ENCODE measurements at regions of chr10 and their contacts with region 1.

Region 1: DNA sequence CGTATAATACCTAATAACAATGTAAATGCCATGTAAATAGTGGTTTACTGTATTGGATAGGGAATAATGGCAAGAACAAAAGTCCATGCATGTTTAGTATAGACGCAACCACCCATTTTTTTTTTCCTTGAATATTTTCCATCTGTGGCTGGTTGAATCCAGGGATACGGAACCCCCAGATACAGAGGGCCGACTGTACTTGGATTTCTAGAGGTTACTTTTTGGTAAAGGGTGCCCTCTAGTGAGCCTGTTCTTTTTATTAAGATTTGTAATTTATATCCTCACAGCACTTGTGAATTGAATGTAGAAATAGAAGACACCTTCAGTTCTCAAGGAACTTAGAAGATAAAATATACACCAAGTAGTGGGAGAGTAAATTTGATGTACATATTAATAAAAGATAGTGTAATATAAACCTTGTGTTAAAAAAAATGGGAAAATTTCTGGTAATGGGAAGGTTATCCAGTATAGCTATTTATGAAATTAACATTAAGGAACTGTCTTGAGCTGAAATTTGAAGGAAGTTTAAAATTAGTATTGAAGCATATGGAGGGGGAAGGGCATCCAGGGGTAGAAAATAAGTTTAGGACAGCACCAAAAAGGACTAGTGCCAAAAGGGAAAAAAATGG is 32.0 kb downstream of the EXOC6 start:
- DNase-seq: no peak
- H3K4me3 Mint-ChIP-seq: no peak overlapping the region
- H3K27ac Mint-ChIP-seq: no peak overlapping the region
- H3K4me1 Mint-ChIP-seq: peaks cover 21% of the 10 kb centered on the region
- H3K27me3 Mint-ChIP-seq: no peaks in the 10 kb centered on the region

Region 2: GRCh38 chr10:91901784-91902677 is 978.3 kb before region 1 on chr10:
- CTCF ChIA-PET with region 1: no interaction called
- POLR2A ChIA-PET with region 1: no interaction called
- intact Hi-C with region 1: no loop called
- DNase-seq: peak; percentile 69
- H3K4me3 Mint-ChIP-seq: no peak overlapping the region
- H3K27ac Mint-ChIP-seq: peak overlapping the region; percentile 72
- H3K4me1 Mint-ChIP-seq: peaks cover 23% of the 10 kb centered on the region
- H3K27me3 Mint-ChIP-seq: peaks cover 2% of the 10 kb centered on the region

Region 3: GRCh38 chr10:92517034-92517655 is 363.2 kb before region 1 on chr10:
- CTCF ChIA-PET with region 1: interaction called, 4 read pairs
- POLR2A ChIA-PET with region 1: no interaction called
- intact Hi-C with region 1: loop called (anchors 2 kb)
- DNase-seq: peak; percentile 66
- H3K4me3 Mint-ChIP-seq: no peak overlapping the region
- H3K27ac Mint-ChIP-seq: no peak overlapping the region
- H3K4me1 Mint-ChIP-seq: peaks cover 6% of the 10 kb centered on the region
- H3K27me3 Mint-ChIP-seq: no peaks in the 10 kb centered on the region

Region 4: GRCh38 chr10:92848441-92849233 is 31.7 kb before region 1 on chr10 and contains the start of gene EXOC6:
- CTCF ChIA-PET with region 1: interaction called, 22 read pairs
- POLR2A ChIA-PET with region 1: interaction called, 3 read pairs
- intact Hi-C with region 1: loop called (anchors 1 kb)
- DNase-seq: peak; percentile 88
- H3K4me3 Mint-ChIP-seq: peak within 1 kb of the TSS; percentile 84
- H3K27ac Mint-ChIP-seq: peak within 1 kb of the TSS; percentile 74
- H3K4me1 Mint-ChIP-seq: peaks cover 41% of the 10 kb centered on the region
- H3K27me3 Mint-ChIP-seq: no peaks in the 10 kb centered on the region
- total RNA-seq, gene EXOC6: 10.7 to 10.8 TPM

Region 5: GRCh38 chr10:93062514-93063143 is 182.3 kb after region 1 on chr10:
- CTCF ChIA-PET with region 1: interaction called, 3 read pairs
- POLR2A ChIA-PET with region 1: no interaction called
- intact Hi-C with region 1: loop called (anchors 10 kb)
- DNase-seq: peak; percentile 70
- H3K4me3 Mint-ChIP-seq: peak overlapping the region; percentile 60
- H3K27ac Mint-ChIP-seq: no peak overlapping the region
- H3K4me1 Mint-ChIP-seq: peaks cover 23% of the 10 kb centered on the region
- H3K27me3 Mint-ChIP-seq: peaks cover 57% of the 10 kb centered on the region

Region 6: DNA sequence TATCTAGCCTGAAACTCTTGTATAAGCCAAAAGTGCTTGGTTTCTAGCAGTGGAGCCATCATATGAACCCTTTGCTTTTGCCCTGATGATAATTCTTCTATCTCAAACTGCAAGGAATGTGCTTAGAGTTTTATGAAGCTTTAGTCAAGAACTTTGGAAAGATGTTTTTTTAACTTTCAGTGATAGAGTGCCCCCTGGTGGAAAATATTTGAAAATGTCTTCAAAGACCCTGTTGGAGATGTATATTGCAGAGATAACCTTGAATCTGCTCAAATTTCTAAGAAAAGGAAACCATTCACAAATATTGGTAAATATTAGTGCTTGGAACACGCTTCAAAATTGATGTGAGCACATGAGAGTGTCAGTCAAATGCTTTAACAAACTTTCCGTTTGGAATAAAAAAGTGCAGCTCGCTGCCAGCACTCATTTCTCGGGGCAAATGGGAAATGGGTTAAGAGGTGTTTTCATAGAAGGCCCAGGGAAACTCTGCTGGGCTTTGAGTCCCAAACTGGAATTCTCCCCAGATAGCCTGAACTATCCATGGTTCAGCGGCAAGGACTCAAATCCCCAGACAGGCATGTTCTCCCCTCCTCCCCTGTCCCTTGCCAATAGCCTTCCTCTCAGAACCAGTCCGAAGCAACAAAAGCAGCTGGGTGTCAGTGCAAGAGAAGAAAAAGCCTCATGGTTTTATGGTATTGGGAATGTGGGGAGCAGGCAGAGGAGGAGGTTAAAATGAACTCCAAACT is 472.5 kb after region 1 on chr10:
- CTCF ChIA-PET with region 1: interaction called, 6 read pairs
- POLR2A ChIA-PET with region 1: no interaction called
- intact Hi-C with region 1: loop called (anchors 2 kb)
- DNase-seq: no peak
- H3K4me3 Mint-ChIP-seq: no peak overlapping the region
- H3K27ac Mint-ChIP-seq: no peak overlapping the region
- H3K4me1 Mint-ChIP-seq: peaks cover 3% of the 10 kb centered on the region
- H3K27me3 Mint-ChIP-seq: peaks cover 11% of the 10 kb centered on the region

Measured in activated CD4-positive, alpha-beta memory T cell treated with anti-CD3 and anti-CD28 coated beads for 36 hours (primary cell).